Colonic mucosa (tissue), 4 donors: ENCODE measurements at regions of chr2 and their contacts with region 1.

Region 1: GRCh38 chr2:119702918-119703401 is 24.0 kb downstream of the TMEM177 start:
- DNase-seq: peak; percentile 62
- H3K4me3 ChIP-seq: no peak overlapping the region
- H3K27ac ChIP-seq: no peak overlapping the region
- H3K4me1 ChIP-seq: no peaks in the 10 kb centered on the region
- H3K27me3 ChIP-seq: no peaks in the 10 kb centered on the region
- CTCF ChIP-seq: peak; percentile 95

Region 2: GRCh38 chr2:119198240-119198840 is 504.6 kb before region 1 on chr2:
- intact Hi-C with region 1: no loop called
- DNase-seq: no peak
- H3K4me3 ChIP-seq: no peak overlapping the region
- H3K27ac ChIP-seq: no peak overlapping the region
- H3K4me1 ChIP-seq: no peaks in the 10 kb centered on the region
- H3K27me3 ChIP-seq: no peaks in the 10 kb centered on the region
- CTCF ChIP-seq: no peak

Region 3: GRCh38 chr2:119641562-119642258 is 61.2 kb before region 1 on chr2:
- intact Hi-C with region 1: no loop called
- DNase-seq: peak; percentile 73
- H3K4me3 ChIP-seq: no peak overlapping the region
- H3K27ac ChIP-seq: no peak overlapping the region
- H3K4me1 ChIP-seq: no peaks in the 10 kb centered on the region
- H3K27me3 ChIP-seq: no peaks in the 10 kb centered on the region
- CTCF ChIP-seq: peak; percentile 96

Region 4: DNA sequence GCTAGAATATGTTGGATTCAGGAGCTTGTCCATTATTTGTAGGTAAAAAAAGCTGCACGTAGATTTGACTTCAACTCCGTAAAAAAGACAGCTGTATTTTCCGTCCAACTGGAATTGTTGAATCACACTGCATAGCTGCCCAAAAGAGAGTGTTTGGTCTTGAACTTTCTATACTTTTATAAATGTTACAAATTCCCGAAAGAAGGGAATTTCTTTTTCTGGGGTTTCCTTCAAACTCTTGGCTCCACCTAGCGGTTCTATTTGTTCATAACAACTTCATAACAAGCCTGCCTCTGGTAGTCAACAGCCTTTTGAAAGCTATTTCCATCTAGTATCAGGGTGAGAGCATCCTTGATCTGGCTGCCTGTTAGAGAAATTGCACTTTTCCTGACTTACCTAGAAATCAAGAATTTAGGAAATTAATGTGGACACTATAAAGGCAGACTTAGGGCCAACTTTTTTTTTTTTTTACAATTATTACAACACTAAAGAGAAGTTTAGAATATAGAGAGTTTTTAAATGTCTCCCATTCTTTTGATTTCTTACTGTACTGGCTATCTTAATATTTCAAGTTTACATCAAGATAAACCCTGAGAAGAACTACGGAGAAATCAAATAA is 472.1 kb after region 1 on chr2:
- intact Hi-C with region 1: loop called (anchors 2 kb)
- DNase-seq: peak; percentile 30
- H3K4me3 ChIP-seq: no peak overlapping the region
- H3K27ac ChIP-seq: no peak overlapping the region
- H3K4me1 ChIP-seq: no peaks in the 10 kb centered on the region
- H3K27me3 ChIP-seq: no peaks in the 10 kb centered on the region
- CTCF ChIP-seq: peak; percentile 66